ENCODE measurements at regions of chr12 and their contacts with region 1.

Region 1: DNA sequence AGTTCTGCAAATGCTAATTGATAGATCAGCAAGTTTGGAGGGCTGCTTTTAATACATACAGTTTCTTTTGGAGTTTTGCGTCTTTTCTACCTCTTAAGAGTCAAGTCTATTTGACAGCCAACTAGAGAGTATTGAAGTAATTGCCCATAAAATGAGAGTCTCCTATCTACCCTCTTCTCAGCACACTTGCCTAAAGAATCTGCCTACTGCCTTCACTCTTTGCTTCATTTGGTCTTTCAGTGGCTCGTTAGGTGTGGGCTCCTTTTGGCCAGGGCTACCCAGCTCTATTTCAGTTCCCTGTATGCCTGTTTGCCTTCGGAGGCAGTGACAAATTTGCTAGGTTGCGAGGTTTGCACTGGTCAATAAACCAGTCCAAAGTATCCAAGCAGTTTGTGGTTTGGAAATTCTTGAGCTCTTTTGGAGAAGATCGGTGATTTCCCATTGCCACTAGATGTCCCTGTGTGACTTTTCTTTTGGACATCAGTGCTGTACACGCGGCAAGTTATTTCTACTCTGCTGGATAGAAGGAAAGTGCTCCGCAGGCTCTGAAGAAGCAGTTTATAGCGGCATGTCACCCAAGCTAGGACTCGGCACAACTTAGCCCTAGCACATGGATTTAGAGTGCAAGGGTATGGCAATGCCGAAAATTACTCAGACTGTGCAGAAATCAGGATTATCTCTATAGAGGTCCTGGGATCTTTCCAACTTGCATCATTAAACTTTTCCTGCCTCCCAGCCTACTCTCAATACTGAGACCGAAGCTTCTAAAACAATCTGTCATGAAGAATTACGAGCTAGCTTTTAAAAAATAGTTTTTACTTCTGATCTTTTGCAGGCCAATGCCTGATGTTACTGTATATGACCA is 38.6 kb downstream of the MGST1 start:
- DNase-seq: no peak
- H3K4me3 ChIP-seq: no peak overlapping the region
- H3K27ac ChIP-seq: no peak overlapping the region
- H3K4me1 ChIP-seq: peaks cover 14% of the 10 kb centered on the region; the same call in 1 of the 2 replicates
- H3K27me3 ChIP-seq: no peaks in the 10 kb centered on the region
- CTCF ChIP-seq: peak; percentile 56; the same call in 1 of the 2 replicates

Region 2: GRCh38 chr12:16165506-16165905 is 220.5 kb before region 1 on chr12:
- CTCF ChIA-PET with region 1: no interaction called
- POLR2A ChIA-PET with region 1: interaction called, 6 read pairs
- intact Hi-C with region 1: loop called (anchors 1 kb)
- DNase-seq: peak in 1 of 2 experiments; percentile 53
- H3K4me3 ChIP-seq: no peak overlapping the region
- H3K27ac ChIP-seq: no peak overlapping the region
- H3K4me1 ChIP-seq: no peaks in the 10 kb centered on the region
- H3K27me3 ChIP-seq: no peaks in the 10 kb centered on the region
- CTCF ChIP-seq: peak; percentile 80

Region 3: GRCh38 chr12:16573398-16574077 is 187.5 kb after region 1 on chr12:
- CTCF ChIA-PET with region 1: no interaction called
- POLR2A ChIA-PET with region 1: interaction called, 14 read pairs
- intact Hi-C with region 1: no loop called
- DNase-seq: no peak
- H3K4me3 ChIP-seq: no peak overlapping the region
- H3K27ac ChIP-seq: no peak overlapping the region
- H3K4me1 ChIP-seq: no peaks in the 10 kb centered on the region
- H3K27me3 ChIP-seq: no peaks in the 10 kb centered on the region
- CTCF ChIP-seq: no peak

Region 4: DNA sequence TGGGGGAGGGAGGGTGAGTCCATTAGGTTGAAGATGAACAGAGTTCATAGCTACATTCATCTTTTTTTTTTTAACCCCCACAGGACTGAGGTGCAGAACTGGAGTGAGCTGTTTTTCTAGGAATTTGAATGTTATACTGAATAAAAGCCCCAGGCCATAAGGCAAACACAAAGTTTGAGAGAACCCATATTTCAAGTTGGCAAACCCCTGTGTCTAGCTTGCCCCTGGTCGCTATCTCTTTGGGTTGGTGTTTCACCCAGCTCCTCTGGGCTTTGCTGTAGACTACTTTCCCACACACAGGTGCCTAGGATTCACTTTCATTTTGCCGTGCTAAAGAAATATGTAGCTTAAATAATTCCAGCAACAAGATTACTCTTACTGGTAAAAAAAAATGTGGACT is 225.1 kb after region 1 on chr12:
- CTCF ChIA-PET with region 1: no interaction called
- POLR2A ChIA-PET with region 1: no interaction called
- intact Hi-C with region 1: loop called (anchors 10 kb)
- DNase-seq: no peak
- H3K4me3 ChIP-seq: no peak overlapping the region
- H3K27ac ChIP-seq: no peak overlapping the region
- H3K4me1 ChIP-seq: 0 out of 2 replicates have a peak, but pooled peaks cover 9% of the 10 kb centered on the region
- H3K27me3 ChIP-seq: no peaks in the 10 kb centered on the region
- CTCF ChIP-seq: no peak

Region 5: DNA sequence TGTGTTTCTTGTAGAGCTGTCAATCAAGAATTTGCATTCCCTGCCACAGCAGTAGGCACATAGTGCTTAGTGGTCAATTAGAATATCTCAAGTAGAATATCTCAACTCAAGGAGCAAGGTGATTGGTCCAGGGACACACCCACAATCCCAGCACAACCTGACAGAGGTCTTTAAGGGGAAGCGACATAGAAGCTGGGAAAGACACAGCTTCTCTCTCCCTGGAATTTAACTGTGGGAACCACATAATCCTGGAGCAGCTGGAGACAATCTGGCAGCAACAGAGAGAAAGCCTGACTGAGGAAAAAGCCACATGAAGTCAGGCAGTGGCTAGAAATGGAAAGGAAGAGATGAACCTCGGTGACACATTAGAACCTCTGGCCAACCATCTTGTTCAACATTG is 305.6 kb after region 1 on chr12:
- CTCF ChIA-PET with region 1: no interaction called
- POLR2A ChIA-PET with region 1: no interaction called
- intact Hi-C with region 1: no loop called
- DNase-seq: no peak
- H3K4me3 ChIP-seq: no peak overlapping the region
- H3K27ac ChIP-seq: no peak overlapping the region
- H3K4me1 ChIP-seq: no peaks in the 10 kb centered on the region
- H3K27me3 ChIP-seq: no peaks in the 10 kb centered on the region
- CTCF ChIP-seq: no peak

Region 6: DNA sequence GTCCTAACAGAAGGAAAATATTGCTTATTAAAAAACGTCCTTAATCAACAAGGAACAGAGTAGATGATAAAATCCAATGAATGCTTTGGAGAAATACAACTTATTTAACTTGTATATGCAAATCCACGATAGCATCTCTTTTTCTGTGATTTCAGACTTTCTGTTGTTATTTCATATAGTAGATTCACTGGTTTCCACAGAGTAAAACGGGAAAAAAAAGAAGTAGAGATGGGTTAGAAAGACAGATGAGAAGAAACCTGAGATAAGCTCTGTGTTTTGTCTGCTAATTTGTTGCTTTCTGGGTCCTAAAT is 1256.3 kb after region 1 on chr12:
- CTCF ChIA-PET with region 1: no interaction called
- POLR2A ChIA-PET with region 1: no interaction called
- intact Hi-C with region 1: loop called (anchors 5 kb)
- DNase-seq: no peak
- H3K4me3 ChIP-seq: no peak overlapping the region
- H3K27ac ChIP-seq: no peak overlapping the region
- H3K4me1 ChIP-seq: no peaks in the 10 kb centered on the region
- H3K27me3 ChIP-seq: no peaks in the 10 kb centered on the region
- CTCF ChIP-seq: peak; percentile 16; the same call in 1 of the 2 replicates

Region 7: DNA sequence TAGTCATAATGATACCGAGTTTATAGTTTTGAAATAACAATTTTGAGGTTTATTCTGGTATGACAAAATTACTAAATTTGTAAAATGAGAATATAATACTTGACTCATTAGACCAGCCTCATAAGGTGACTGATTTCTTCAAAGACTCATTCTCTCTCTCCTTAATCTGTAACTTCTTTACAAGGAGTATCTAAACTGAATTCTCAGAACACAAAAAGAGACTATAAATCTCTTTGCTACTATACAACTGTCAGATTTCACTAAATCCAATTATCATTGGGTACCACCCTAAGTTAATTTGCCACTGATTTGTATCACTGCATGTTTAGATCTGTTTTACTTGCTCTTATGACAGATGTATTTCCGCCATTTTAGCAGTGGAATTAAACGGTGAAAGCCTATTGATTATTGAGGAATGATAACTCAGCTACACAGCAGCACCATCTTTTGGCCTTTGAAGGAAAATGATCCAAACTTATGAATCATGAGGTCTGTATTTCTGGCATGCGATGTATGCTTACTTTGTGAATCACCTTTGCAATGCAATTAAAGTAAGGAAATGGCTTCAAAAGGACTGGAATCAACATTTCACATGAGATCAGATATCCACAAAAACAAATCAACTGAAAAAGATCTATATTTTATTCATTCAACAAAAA is 1542.8 kb after region 1 on chr12:
- CTCF ChIA-PET with region 1: no interaction called
- POLR2A ChIA-PET with region 1: no interaction called
- intact Hi-C with region 1: loop called (anchors 10 kb)
- DNase-seq: peak; percentile 13 to 79
- H3K4me3 ChIP-seq: no peak overlapping the region
- H3K27ac ChIP-seq: no peak overlapping the region
- H3K4me1 ChIP-seq: peaks cover 3% of the 10 kb centered on the region
- H3K27me3 ChIP-seq: no peaks in the 10 kb centered on the region
- CTCF ChIP-seq: peak; percentile 61; the same call in 1 of the 2 replicates

Region 8: GRCh38 chr12:17992002-17992656 is 1606.1 kb after region 1 on chr12:
- CTCF ChIA-PET with region 1: no interaction called
- POLR2A ChIA-PET with region 1: no interaction called
- intact Hi-C with region 1: loop called (anchors 5 kb)
- DNase-seq: peak in 1 of 2 experiments; percentile 39
- H3K4me3 ChIP-seq: no peak overlapping the region
- H3K27ac ChIP-seq: no peak overlapping the region
- H3K4me1 ChIP-seq: no peaks in the 10 kb centered on the region
- H3K27me3 ChIP-seq: no peaks in the 10 kb centered on the region
- CTCF ChIP-seq: peak; percentile 87